ENCODE measurements at regions of chr6 and their contacts with region 1.

Region 1: GRCh38 chr6:16438718-16439591 is 200.6 kb downstream of the GMPR start:
- DNase-seq: peak; percentile 53
- ATAC-seq: peak; percentile 78
- H3K4me3 ChIP-seq: no peak overlapping the region
- H3K27ac ChIP-seq: peak overlapping the region; percentile 70
- H3K4me1 ChIP-seq: peaks cover 41% of the 10 kb centered on the region
- H3K27me3 ChIP-seq: no peaks in the 10 kb centered on the region
- CTCF ChIP-seq: no peak
- EP300 ChIP-seq: no peak
- POLR2A ChIP-seq: no peak
- RAD21 ChIP-seq: no peak

Region 2: GRCh38 chr6:16481697-16482399 is 42.9 kb after region 1 on chr6:
- CTCF ChIA-PET with region 1: interaction called, 5 read pairs
- POLR2A ChIA-PET with region 1: interaction called, 4 read pairs
- RAD21 ChIA-PET with region 1: interaction called, 17 read pairs
- SMC1A ChIA-PET with region 1: interaction called, 314 read pairs
- in situ Hi-C with region 1: no loop called
- intact Hi-C with region 1: no loop called
- DNase-seq: no peak
- ATAC-seq: peak; percentile 61
- H3K4me3 ChIP-seq: peak overlapping the region; percentile 20; the same call in 1 of the 2 replicates
- H3K27ac ChIP-seq: peak overlapping the region; percentile 83
- H3K4me1 ChIP-seq: peaks cover 65% of the 10 kb centered on the region
- H3K27me3 ChIP-seq: no peaks in the 10 kb centered on the region
- CTCF ChIP-seq: no peak
- EP300 ChIP-seq: peak; percentile 68 to 77; a peak in 3 of 4 replicates
- POLR2A ChIP-seq: no peak
- RAD21 ChIP-seq: peak; percentile 3; the same call in 1 of the 2 replicates

Region 3: DNA sequence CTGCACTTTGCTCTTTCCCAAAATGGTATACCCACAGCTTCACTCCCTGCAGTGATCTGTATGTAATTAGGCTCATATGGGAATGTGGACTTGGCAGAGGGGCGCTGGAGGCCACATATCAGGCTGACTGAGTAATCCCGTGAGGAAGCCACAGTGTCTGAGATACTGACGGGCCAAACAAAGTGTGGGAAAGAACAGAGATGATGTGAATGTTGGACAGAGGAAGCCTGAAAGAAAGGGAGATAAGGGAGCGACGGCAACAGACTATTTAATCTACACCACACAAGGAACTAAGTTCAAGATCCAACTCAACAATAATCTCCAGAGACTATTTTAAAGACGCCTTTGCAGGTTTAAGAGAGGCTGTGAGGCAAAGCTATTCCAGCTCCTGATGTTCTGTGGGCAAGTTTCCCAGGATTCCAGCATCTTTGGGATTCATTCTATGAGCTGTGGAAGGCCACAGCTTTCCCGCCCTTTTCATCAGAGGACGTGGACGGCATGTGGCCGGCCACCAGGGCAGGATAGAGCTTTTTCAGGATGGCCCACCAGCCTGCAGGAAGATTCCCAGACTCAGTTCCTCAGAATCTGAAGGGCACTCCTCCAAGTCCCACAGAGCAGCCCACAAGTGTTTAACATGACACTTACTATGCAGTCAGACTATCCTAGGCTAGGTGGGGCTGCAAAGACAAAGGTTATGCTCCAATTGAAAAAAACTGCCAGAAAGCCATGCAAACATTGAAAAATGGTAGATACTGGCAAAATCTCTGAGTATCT is 84.8 kb after region 1 on chr6:
- CTCF ChIA-PET with region 1: no interaction called
- POLR2A ChIA-PET with region 1: no interaction called
- RAD21 ChIA-PET with region 1: no interaction called
- SMC1A ChIA-PET with region 1: no interaction called
- in situ Hi-C with region 1: no loop called
- intact Hi-C with region 1: no loop called
- DNase-seq: no peak
- ATAC-seq: no peak
- H3K4me3 ChIP-seq: no peak overlapping the region
- H3K27ac ChIP-seq: no peak overlapping the region
- H3K4me1 ChIP-seq: peaks cover 9% of the 10 kb centered on the region
- H3K27me3 ChIP-seq: no peaks in the 10 kb centered on the region
- CTCF ChIP-seq: no peak
- EP300 ChIP-seq: no peak
- POLR2A ChIP-seq: no peak
- RAD21 ChIP-seq: no peak